ENCODE measurements at regions of chr3 and their contacts with region 1.

Region 1: DNA sequence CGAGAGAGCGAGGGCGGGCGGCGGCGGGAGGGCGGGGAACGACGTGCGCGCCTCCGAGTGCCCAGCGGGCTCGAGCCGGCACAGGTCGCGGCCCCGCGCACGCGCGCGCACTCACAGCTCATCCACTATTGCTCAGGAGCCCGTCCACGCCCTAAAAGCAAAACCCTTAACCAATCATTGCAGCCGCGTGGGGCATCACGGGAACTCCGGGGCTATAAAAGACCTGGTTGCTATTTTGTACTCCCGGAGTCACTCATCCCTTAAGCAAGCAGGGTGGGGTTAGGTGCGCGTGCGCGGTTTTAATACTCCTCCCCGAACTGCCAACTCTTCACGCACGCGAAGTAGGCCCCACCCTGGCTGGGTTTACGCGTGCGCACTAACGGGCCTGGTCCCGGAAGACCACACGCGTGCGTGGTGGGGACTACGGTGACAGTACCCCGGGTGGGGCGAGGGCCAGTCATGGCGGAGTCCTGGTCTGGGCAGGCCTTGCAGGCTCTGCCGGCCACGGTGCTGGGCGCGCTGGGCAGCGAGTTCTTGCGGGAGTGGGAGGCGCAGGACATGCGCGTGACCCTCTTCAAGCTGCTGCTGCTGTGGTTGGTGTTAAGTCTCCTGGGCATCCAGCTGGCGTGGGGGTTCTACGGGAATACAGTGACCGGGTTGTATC is at the starts of genes RHOA and TCTA:
- DNase-seq: peak; percentile 95 to 100 (median 99)
- ATAC-seq: peak; percentile 86 to 90 (median 88)
- H3K4me3 ChIP-seq: peak within 1 kb of the TSS; percentile 85 to 94
- H3K4me3 Mint-ChIP-seq: peak within 1 kb of the TSS; percentile 88 to 94 (median 91)
- H3K27ac ChIP-seq: peak within 1 kb of the TSS; percentile 95
- H3K27ac Mint-ChIP-seq: peak within 1 kb of the TSS; percentile 95 to 96
- H3K4me1 ChIP-seq: peaks cover 45 to 75% of the 10 kb centered on the region in 2 experiments
- H3K4me1 Mint-ChIP-seq: peaks cover 71 to 79% (median 73%) of the 10 kb centered on the region in 3 donors
- H3K27me3 ChIP-seq: no peaks in the 10 kb centered on the region
- H3K27me3 Mint-ChIP-seq: no peaks in the 10 kb centered on the region
- total RNA-seq, gene RHOA: 247 to 279 (median 269) TPM
- total RNA-seq, gene TCTA: 22.8 to 38.2 (median 34.3) TPM

Region 2: GRCh38 chr3:49248846-49249238 is 163.3 kb before region 1 on chr3:
- CTCF ChIA-PET with region 1: no interaction called
- POLR2A ChIA-PET with region 1: no interaction called
- DNase-seq: no peak
- ATAC-seq: no peak
- H3K4me3 ChIP-seq: no peak overlapping the region
- H3K4me3 Mint-ChIP-seq: no peak overlapping the region
- H3K27ac ChIP-seq: no peak overlapping the region
- H3K27ac Mint-ChIP-seq: no peak overlapping the region
- H3K4me1 ChIP-seq: no peaks in the 10 kb centered on the region
- H3K4me1 Mint-ChIP-seq: no peaks in the 10 kb centered on the region
- H3K27me3 ChIP-seq: no peaks in the 10 kb centered on the region
- H3K27me3 Mint-ChIP-seq: peaks cover 0 to 2% of the 10 kb centered on the region in 2 donors

Region 3: GRCh38 chr3:49445381-49445780 is 33.3 kb after region 1 on chr3:
- CTCF ChIA-PET with region 1: interaction called in 1 of 2 experiments, 33 read pairs
- POLR2A ChIA-PET with region 1: interaction called in 1 of 2 experiments, 3 read pairs
- DNase-seq: no peak
- ATAC-seq: no peak
- H3K4me3 ChIP-seq: no peak overlapping the region
- H3K4me3 Mint-ChIP-seq: no peak overlapping the region
- H3K27ac ChIP-seq: no peak overlapping the region
- H3K27ac Mint-ChIP-seq: peak overlapping the region; percentile 55 to 87
- H3K4me1 ChIP-seq: peaks cover 4 to 21% of the 10 kb centered on the region in 2 experiments
- H3K4me1 Mint-ChIP-seq: peaks cover 11 to 20% (median 14%) of the 10 kb centered on the region in 3 donors
- H3K27me3 ChIP-seq: no peaks in the 10 kb centered on the region
- H3K27me3 Mint-ChIP-seq: no peaks in the 10 kb centered on the region

Region 4: GRCh38 chr3:49454458-49454857 is 42.4 kb after region 1 on chr3:
- CTCF ChIA-PET with region 1: interaction called in 1 of 2 experiments, 33 read pairs
- POLR2A ChIA-PET with region 1: interaction called, 3 read pairs
- DNase-seq: no peak
- ATAC-seq: peak in 1 of 4 experiments; percentile 56
- H3K4me3 ChIP-seq: no peak overlapping the region
- H3K4me3 Mint-ChIP-seq: no peak overlapping the region
- H3K27ac ChIP-seq: no peak overlapping the region
- H3K27ac Mint-ChIP-seq: no peak overlapping the region
- H3K4me1 ChIP-seq: no peaks in the 10 kb centered on the region
- H3K4me1 Mint-ChIP-seq: no peaks in the 10 kb centered on the region
- H3K27me3 ChIP-seq: no peaks in the 10 kb centered on the region
- H3K27me3 Mint-ChIP-seq: no peaks in the 10 kb centered on the region

Region 5: GRCh38 chr3:49616491-49616941 is 204.4 kb after region 1 on chr3:
- CTCF ChIA-PET with region 1: no interaction called
- POLR2A ChIA-PET with region 1: no interaction called
- DNase-seq: no peak
- ATAC-seq: no peak
- H3K4me3 ChIP-seq: no peak overlapping the region
- H3K4me3 Mint-ChIP-seq: no peak overlapping the region
- H3K27ac ChIP-seq: no peak overlapping the region
- H3K27ac Mint-ChIP-seq: no peak overlapping the region
- H3K4me1 ChIP-seq: no peaks in the 10 kb centered on the region
- H3K4me1 Mint-ChIP-seq: no peaks in the 10 kb centered on the region
- H3K27me3 ChIP-seq: peaks cover 0 to 6% of the 10 kb centered on the region in 2 experiments
- H3K27me3 Mint-ChIP-seq: peaks cover 0 to 9% of the 10 kb centered on the region in 2 donors

Region 6: GRCh38 chr3:49856181-49857005 is 444.3 kb after region 1 on chr3 and contains the start of gene TRAIP:
- CTCF ChIA-PET with region 1: no interaction called
- POLR2A ChIA-PET with region 1: no interaction called
- DNase-seq: peak; percentile 74 to 97 (median 88)
- ATAC-seq: peak; percentile 98 to 100 (median 100)
- H3K4me3 ChIP-seq: peak within 1 kb of the TSS; percentile 57 to 86
- H3K4me3 Mint-ChIP-seq: peak within 1 kb of the TSS; percentile 81 to 89 (median 82)
- H3K27ac ChIP-seq: peak within 1 kb of the TSS; percentile 64
- H3K27ac Mint-ChIP-seq: peak within 1 kb of the TSS; percentile 78 to 93
- H3K4me1 ChIP-seq: peaks cover 9 to 15% of the 10 kb centered on the region in 2 experiments
- H3K4me1 Mint-ChIP-seq: peaks cover 10 to 16% (median 14%) of the 10 kb centered on the region in 3 donors
- H3K27me3 ChIP-seq: peaks cover 0 to 1% of the 10 kb centered on the region in 2 experiments
- H3K27me3 Mint-ChIP-seq: no peaks in the 10 kb centered on the region
- total RNA-seq, gene TRAIP: 4.0 to 5.7 (median 4.4) TPM

Measured in T-cell (primary cell).